Activated T-helper 1 cell treated with anti-CD3 and anti-CD28 coated beads, Interleukin-12 subunit alpha, Interleukin-12 subunit beta, Interleukin-2, Interleukin-4 antibody, amounts not matched to agents 30 ng/mL and 10 ng/mL and 1 ng/mL, durations not matched to agents 14 hours and 24 hours and 36 hours (primary cell): ENCODE measurements at regions of chr5 and their contacts with region 1.

Region 1: DNA sequence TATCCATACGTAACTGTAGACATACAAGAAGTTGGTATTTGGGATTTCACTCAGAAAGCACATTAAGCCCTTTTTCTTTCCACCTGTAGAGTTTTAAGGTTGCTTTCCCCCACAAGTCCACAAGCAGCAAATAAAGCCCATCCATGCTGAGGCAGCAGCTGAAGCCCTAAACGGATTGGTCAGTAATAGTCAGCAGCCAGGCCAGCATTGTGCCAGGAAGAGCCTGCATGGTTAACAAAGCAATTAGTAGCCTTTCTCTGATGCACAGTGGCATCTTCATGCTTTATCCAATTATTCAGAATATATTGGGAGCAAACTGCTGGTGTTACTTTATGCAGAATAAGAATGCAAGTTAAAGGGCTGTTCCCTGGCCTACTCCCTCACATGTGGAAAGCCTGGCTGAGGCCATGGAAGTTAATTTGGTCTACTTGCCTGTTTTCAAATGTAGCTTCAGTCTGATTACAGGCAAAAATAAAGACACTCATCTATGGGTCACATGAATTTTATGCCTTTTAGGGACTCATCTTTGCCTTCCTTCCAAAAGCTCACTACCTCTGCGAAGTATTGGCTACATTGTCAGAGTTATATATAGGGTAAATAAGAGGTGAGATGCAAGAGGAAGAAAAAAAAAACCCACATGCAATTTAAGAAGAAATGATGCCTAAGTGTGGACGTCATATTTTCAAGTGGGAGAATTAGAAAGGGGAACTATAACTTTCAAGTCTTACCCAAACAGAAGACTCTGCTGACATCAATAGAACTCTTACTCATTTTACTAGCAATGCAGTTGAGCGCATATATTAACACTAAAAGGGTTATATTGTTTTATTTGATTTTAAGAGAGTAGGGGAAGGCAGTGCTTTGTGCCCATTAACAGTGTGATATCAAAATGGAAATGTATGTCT is 15.9 kb downstream of the EBF1 start:
- DNase-seq: no peak
- H3K4me3 Mint-ChIP-seq: no peak overlapping the region
- H3K27ac Mint-ChIP-seq: no peak overlapping the region
- H3K4me1 Mint-ChIP-seq: no peaks in the 10 kb centered on the region
- H3K27me3 Mint-ChIP-seq: peaks cover 20% of the 10 kb centered on the region

Region 2: GRCh38 chr5:159049844-159050315 is 33.9 kb before region 1 on chr5:
- intact Hi-C with region 1: loop called (anchors 1 kb)
- DNase-seq: no peak
- H3K4me3 Mint-ChIP-seq: no peak overlapping the region
- H3K27ac Mint-ChIP-seq: no peak overlapping the region
- H3K4me1 Mint-ChIP-seq: no peaks in the 10 kb centered on the region
- H3K27me3 Mint-ChIP-seq: peaks cover 61% of the 10 kb centered on the region

Region 3: GRCh38 chr5:159478950-159479349 is 395.1 kb after region 1 on chr5:
- intact Hi-C with region 1: no loop called
- DNase-seq: no peak
- H3K4me3 Mint-ChIP-seq: no peak overlapping the region
- H3K27ac Mint-ChIP-seq: no peak overlapping the region
- H3K4me1 Mint-ChIP-seq: peaks cover 10% of the 10 kb centered on the region
- H3K27me3 Mint-ChIP-seq: peaks cover 25% of the 10 kb centered on the region

Region 4: GRCh38 chr5:160151017-160151416 is 1067.2 kb after region 1 on chr5:
- intact Hi-C with region 1: no loop called
- DNase-seq: no peak
- H3K4me3 Mint-ChIP-seq: no peak overlapping the region
- H3K27ac Mint-ChIP-seq: no peak overlapping the region
- H3K4me1 Mint-ChIP-seq: no peaks in the 10 kb centered on the region
- H3K27me3 Mint-ChIP-seq: no peaks in the 10 kb centered on the region